ENCODE measurements at regions of chr5 and their contacts with region 1.

Region 1: GRCh38 chr5:92353107-92354030 is 970.3 kb upstream of the ARRDC3 start:
- DNase-seq: no peak
- ATAC-seq: peak; percentile 77
- H3K4me3 ChIP-seq: no peak overlapping the region
- H3K27ac ChIP-seq: no peak overlapping the region
- H3K4me1 ChIP-seq: no peaks in the 10 kb centered on the region
- H3K27me3 ChIP-seq: no peaks in the 10 kb centered on the region
- CTCF ChIP-seq: no peak
- EP300 ChIP-seq: no peak
- POLR2A ChIP-seq: no peak
- RAD21 ChIP-seq: no peak

Region 2: GRCh38 chr5:92332039-92332438 is 21.3 kb before region 1 on chr5:
- CTCF ChIA-PET with region 1: no interaction called
- POLR2A ChIA-PET with region 1: no interaction called
- RAD21 ChIA-PET with region 1: interaction called, 3 read pairs
- SMC1A ChIA-PET with region 1: interaction called, 13 read pairs
- in situ Hi-C with region 1: no loop called
- intact Hi-C with region 1: no loop called
- DNase-seq: no peak
- ATAC-seq: peak; percentile 50
- H3K4me3 ChIP-seq: no peak overlapping the region
- H3K27ac ChIP-seq: no peak overlapping the region
- H3K4me1 ChIP-seq: no peaks in the 10 kb centered on the region
- H3K27me3 ChIP-seq: no peaks in the 10 kb centered on the region
- CTCF ChIP-seq: no peak
- EP300 ChIP-seq: no peak
- POLR2A ChIP-seq: no peak
- RAD21 ChIP-seq: no peak

Region 3: DNA sequence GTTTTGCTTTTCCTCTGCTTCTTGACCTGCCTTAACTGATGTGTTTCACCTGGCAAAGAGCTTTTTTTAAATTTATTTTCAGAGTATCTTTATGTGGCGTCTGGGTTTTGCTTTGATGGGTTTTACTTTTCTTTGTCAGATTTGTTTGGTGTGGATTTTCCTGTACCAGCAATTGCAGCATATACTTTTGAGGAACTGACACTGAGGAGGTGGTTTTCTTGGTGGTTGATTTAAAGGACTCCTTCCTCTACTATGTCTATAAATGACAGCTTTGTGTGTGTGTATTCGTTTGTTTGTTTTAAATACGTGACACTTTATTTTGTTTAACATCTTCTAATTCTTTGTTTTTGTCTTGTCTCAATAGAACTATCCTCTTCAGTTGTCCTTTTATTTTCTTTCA is 101.6 kb after region 1 on chr5:
- CTCF ChIA-PET with region 1: no interaction called
- POLR2A ChIA-PET with region 1: no interaction called
- RAD21 ChIA-PET with region 1: no interaction called
- SMC1A ChIA-PET with region 1: interaction called, 10 read pairs
- in situ Hi-C with region 1: no loop called
- intact Hi-C with region 1: no loop called
- DNase-seq: peak; percentile 73
- ATAC-seq: peak; percentile 100
- H3K4me3 ChIP-seq: no peak overlapping the region; the same call in 1 of the 2 replicates
- H3K27ac ChIP-seq: no peak overlapping the region
- H3K4me1 ChIP-seq: no peaks in the 10 kb centered on the region; the same call in 1 of the 2 replicates
- H3K27me3 ChIP-seq: no peaks in the 10 kb centered on the region
- CTCF ChIP-seq: no peak
- EP300 ChIP-seq: peak; percentile 66 to 88
- POLR2A ChIP-seq: no peak
- RAD21 ChIP-seq: 0 out of 2 replicates have a peak, but pooled peaks have one; percentile 3

Region 4: DNA sequence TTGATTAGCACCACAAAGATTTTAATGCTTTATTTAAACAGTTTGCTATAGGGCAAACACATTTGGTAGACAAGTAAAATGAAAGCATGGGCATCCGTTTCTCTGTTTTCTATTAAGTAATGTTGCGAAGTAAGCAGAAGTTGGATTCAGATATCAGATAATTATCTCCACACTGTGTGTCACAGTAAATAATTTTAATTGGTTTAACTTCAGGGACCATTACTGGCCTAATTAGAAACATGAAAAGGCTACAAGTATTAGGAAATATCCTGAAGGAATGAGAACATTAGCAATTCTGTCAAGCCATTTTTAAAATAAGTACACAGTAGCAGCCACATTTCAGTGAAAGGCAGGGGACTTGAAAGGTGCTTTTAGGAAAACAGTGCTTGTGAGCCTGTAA is 252.2 kb after region 1 on chr5:
- CTCF ChIA-PET with region 1: no interaction called
- POLR2A ChIA-PET with region 1: no interaction called
- RAD21 ChIA-PET with region 1: no interaction called
- SMC1A ChIA-PET with region 1: no interaction called
- in situ Hi-C with region 1: no loop called
- intact Hi-C with region 1: no loop called
- DNase-seq: no peak
- ATAC-seq: no peak
- H3K4me3 ChIP-seq: no peak overlapping the region
- H3K27ac ChIP-seq: no peak overlapping the region
- H3K4me1 ChIP-seq: no peaks in the 10 kb centered on the region
- H3K27me3 ChIP-seq: no peaks in the 10 kb centered on the region
- CTCF ChIP-seq: no peak
- EP300 ChIP-seq: no peak
- POLR2A ChIP-seq: no peak
- RAD21 ChIP-seq: no peak